GM13976 (cell line): ENCODE measurements at regions of chr3 and their contacts with region 1.

Region 1: DNA sequence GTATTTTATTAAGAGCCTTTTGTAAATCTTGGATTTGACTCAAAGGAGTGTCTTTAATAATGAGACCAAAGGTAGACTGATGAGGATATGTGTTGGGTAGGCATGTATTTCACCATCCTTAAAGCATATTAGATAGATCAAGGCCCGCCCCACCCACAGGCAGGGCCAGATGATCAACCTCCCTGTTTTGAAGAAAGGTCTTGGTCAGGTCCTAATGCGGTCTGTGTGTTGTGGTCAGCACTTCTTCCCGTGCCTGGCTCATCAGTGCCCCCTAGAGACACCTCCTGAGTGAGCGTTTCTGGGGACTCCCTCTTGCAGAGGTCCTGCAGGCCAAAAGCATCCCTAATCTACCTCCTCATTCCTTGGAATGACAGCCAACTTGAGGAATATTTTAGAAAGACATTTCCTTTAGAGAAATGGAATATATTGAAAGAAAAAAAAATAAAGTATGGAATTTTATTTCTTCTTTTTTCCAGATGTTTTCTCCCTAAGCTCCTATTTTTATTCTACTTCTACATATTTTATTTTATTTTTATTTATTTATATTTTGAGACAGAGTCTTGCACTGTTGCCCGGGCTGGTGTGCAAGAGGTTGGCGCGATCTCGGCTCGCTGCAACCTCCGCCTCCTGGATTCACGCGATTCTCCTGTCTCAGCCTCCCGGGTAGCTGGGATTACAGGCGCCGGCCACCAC is 6.0 kb downstream of the TM4SF4 start:
- DNase-seq: peak; percentile 83
- CTCF ChIP-seq: peak; percentile 78

Region 2: DNA sequence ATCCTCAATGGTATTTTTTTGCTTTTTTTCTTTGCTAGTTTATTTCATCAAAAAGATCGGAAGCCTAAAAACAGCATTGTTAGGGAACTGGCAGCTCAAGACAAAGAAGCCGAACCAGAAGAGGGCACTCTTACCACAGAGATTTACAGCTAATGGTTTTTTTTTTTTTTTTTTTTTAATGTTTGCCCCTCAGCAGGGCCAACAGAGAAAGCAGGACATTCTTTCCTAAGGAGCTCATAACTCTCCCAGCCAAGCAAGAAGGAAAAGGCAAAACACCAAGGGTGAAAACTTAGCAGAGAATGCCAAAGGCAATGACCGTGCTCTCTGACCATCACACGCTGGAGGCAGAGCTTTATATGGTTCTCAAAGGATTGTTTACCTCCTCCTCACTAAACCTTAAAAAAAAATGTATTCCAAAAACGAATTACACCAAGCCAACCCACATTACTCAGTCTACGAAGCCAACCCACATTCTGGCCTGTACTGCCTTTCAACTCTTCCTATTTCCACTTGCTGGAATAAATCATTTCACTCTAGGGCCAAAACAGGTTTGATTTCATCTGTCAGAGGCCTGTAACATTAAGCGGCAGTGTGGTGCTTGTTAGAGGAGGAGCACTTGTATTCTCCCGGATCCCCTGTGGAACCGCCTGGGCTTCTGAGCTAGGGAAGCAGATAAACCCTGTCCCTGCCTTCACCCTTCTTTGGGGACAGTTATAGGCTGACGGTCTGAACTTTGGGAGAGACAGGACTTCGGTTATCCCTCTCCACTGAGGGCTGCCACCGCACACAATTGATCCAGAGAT is 524.7 kb before region 1 on chr3:
- in situ Hi-C with region 1: loop called (anchors 25 kb)
- DNase-seq: peak; percentile 18
- CTCF ChIP-seq: peak; percentile 35

Region 3: DNA sequence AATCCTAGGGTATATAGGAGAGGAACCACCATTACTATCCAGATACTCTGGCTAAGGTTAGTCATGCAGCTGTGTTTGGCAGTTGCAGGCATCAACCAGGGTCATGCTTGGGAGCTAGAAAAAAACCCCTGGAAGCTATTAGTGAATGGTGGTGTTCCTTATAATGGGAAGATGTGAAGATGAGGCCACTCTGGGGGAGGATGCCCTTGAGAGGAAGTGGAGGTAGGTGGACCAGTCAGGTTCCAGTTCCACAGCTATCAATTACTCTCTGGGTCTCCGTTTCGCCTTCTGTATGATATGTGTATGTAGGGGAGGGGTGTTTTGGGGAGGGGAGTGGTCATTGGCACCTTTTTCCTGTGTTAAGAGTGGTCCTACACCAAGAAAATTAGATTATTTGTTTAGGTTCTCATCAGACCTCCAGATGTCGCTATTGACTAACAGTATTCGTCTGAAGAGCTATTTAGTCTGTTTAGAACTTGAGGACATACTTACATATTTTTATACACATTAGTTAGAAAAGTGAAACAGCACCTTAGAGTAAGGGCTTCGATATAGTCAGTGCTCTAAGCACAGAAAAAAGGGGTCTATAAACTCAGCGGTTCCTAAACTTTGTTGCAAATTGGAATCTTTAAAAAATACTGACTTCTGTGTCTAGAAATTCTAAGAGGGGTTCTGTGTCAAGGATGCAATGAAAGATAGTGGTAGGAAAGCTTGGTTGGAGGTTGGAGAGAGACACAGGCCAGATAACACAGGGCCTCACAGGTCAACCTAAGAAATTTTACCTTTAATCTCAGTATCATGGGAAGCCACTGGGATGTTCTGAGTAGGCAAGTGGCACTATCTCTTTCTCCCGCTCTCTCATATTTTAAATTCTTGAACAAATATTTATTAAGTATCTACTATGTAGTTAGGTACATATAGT is 360.2 kb before region 1 on chr3:
- in situ Hi-C with region 1: loop called (anchors 25 kb)
- DNase-seq: peak; percentile 75
- CTCF ChIP-seq: peak; percentile 44

Region 4: DNA sequence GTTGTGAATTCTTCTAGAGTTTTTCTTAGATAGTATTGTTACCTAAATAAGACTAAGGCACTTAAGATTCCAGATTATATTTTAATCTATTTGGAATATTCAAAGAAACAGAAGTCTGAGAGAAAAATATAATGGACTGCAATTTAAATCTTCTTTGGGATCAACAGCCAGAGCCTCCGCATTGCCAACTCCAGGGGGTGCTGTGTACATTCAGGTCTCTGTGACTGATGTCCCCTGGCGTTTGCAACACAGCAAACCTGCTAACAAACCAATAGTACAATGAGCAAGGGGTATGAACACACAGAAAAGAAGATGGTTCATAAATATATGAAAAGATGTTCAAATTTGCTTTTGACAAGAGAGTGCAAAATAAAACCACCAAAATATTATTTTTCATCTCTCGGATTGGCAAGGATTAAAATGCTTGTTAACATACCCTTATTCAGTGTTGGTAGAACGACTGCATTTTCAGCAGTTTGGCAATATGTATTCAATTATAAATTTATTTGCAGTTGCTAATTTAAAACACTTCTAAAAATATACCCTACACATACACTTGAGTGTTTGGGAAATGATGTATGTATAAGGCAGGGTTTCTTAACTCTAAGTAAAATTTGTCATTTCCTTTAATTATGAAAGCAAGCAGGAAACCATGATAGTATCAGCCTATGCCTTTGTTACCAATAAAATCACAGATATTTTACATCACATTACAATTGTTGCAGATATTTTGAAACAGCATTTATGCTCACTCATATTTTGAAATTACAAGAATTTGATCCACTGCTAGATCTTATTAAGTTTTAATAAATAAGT is 86.9 kb before region 1 on chr3:
- in situ Hi-C with region 1: loop called (anchors 10 kb)
- DNase-seq: peak; percentile 52
- CTCF ChIP-seq: peak; percentile 65

Region 5: DNA sequence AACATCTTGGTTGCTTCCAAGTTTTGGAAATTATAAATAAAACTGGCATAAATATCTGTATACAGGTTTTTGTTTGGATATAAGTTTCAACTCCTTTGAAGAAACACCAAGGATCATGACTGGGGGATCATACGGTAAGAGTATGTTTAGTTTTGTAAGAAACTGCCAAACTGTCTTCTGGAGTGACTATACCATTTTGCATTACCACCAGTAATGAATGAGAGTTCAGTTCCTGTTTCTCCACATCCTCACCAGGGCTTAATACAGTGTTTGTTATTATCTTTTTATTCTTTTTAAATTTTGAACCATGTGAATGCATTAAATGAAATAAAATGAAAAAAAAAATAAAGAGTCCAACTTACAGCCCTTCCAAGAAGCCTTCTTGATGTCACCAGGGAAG is 315.6 kb after region 1 on chr3:
- in situ Hi-C with region 1: no loop called
- DNase-seq: no peak
- CTCF ChIP-seq: no peak

Region 6: GRCh38 chr3:149860881-149861280 is 380.4 kb after region 1 on chr3:
- in situ Hi-C with region 1: no loop called
- DNase-seq: no peak
- CTCF ChIP-seq: no peak